Ascending aorta (tissue), 2 donors: ENCODE measurements at regions of chr5 and their contacts with region 1.

Region 1: GRCh38 chr5:132190161-132190817 is 37.4 kb downstream of the P4HA2 start:
- DNase-seq: no peak
- H3K4me3 ChIP-seq: no peak overlapping the region
- H3K27ac ChIP-seq: no peak overlapping the region
- H3K4me1 ChIP-seq: no peaks in the 10 kb centered on the region
- H3K27me3 ChIP-seq: no peaks in the 10 kb centered on the region
- CTCF ChIP-seq: peak; percentile 63 to 68 (median 68)

Region 2: GRCh38 chr5:132209131-132209530 is 18.8 kb after region 1 on chr5:
- intact Hi-C with region 1: loop called (anchors 2 kb)
- DNase-seq: peak in 1 of 2 donors; percentile 13
- H3K4me3 ChIP-seq: no peak overlapping the region
- H3K27ac ChIP-seq: no peak overlapping the region
- H3K4me1 ChIP-seq: peaks cover 0 to 10% of the 10 kb centered on the region in 2 donors
- H3K27me3 ChIP-seq: no peaks in the 10 kb centered on the region
- CTCF ChIP-seq: no peak